Ovary (tissue), 10 donors: ENCODE measurements at regions of chr4 and their contacts with region 1.

Region 1: DNA sequence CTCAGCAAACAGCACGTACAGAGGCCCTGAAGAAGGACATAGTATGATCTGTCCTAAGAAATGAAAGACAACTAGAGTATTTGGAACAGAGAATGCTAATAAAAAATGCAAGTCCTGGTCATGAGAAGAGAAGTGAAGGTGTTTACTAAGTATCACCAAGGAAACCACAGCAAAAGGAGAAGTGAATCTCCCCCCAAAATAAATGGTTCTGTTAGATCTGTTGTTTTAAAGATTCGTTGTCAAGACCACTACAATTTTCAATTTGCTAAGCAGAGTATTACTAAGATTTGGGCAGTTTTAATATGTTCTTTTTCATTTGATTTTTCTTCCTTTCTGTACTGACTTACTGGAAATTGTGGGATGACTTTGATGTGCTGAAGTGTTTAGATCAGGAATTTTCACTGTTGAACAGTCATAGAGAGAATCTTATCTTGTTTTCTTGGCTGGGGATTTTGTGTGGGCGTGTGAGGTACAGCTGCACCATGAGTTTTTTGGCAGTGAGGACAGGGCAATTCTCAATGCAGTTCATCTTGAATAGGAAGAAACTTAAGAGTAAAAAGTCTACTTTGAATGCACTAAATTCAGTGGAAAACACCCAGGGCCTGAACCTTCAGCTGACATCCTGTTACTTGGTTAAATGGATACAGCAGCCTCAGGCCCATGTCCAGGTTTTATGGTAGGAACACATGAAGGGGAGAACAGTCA is 132.2 kb downstream of the STIM2 start:
- DNase-seq: peak; percentile 61 to 69 (median 68)
- H3K4me3 ChIP-seq: no peak overlapping the region
- H3K27ac ChIP-seq: peak overlapping the region in 1 of 2 donors; percentile 78
- H3K4me1 ChIP-seq: peaks cover 3% of the 10 kb centered on the region
- H3K27me3 ChIP-seq: no peaks in the 10 kb centered on the region
- CTCF ChIP-seq: no peak
- EP300 ChIP-seq: no peak
- POLR2A ChIP-seq: no peak

Region 2: DNA sequence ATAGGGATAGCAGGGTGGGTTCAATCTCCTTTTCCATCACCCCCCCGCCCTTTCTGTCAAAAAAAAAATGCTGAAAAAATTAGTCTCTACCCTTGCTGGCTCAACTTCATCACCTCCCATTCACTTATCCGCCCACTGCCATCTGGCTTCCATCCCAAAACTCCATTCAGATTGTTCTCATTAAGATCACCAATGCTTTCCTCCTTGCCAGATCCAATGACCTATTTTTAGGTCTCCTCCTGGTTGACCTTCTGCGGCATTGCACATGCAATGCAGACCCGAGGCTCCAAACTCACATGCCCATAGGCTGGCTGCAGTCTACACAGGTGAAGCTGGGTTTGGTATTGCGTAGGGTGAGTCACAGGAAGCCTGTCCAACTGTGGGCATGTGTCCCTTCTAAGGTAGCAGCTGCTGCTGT is 153.3 kb before region 1 on chr4:
- intact Hi-C with region 1: no loop called
- DNase-seq: no peak
- H3K4me3 ChIP-seq: no peak overlapping the region
- H3K27ac ChIP-seq: no peak overlapping the region
- H3K4me1 ChIP-seq: peaks cover 3% of the 10 kb centered on the region
- H3K27me3 ChIP-seq: no peaks in the 10 kb centered on the region
- CTCF ChIP-seq: no peak
- EP300 ChIP-seq: no peak
- POLR2A ChIP-seq: no peak

Region 3: GRCh38 chr4:26860157-26860921 is 132.5 kb before region 1 on chr4 and contains the start of gene STIM2:
- intact Hi-C with region 1: loop called in 3 of 4 experiments (anchors 5 to 10 kb)
- DNase-seq: peak; percentile 96 to 99 (median 97)
- H3K4me3 ChIP-seq: peak within 1 kb of the TSS; percentile 82
- H3K27ac ChIP-seq: peak within 1 kb of the TSS; percentile 96
- H3K4me1 ChIP-seq: peaks cover 4% of the 10 kb centered on the region
- H3K27me3 ChIP-seq: no peaks in the 10 kb centered on the region
- CTCF ChIP-seq: peak; percentile 29 to 68 (median 61)
- EP300 ChIP-seq: no peak
- POLR2A ChIP-seq: peak; percentile 65
- total RNA-seq, gene STIM2: 28.7 to 47.9 (median 40.2) TPM

Region 4: DNA sequence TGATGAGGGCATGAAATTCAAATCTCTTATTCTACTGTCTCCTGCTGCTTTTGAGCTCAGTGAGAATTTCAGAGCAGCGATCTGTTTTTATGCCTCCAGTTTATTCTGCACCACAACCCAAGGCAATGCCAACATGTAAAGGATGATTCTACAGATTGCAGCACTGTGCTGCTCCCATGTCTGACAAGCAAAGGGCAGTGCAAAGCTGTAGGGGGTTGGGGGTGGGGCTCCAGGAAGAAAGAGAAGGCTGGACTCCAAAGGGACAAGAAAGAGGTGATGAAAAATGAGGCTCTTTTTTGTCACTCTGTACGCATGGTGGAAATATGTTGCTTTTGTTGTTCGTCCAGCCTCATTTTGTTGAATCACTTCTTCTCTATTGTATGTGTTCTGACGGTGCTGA is 122.4 kb after region 1 on chr4:
- intact Hi-C with region 1: no loop called
- DNase-seq: no peak
- H3K4me3 ChIP-seq: no peak overlapping the region
- H3K27ac ChIP-seq: no peak overlapping the region
- H3K4me1 ChIP-seq: no peaks in the 10 kb centered on the region
- H3K27me3 ChIP-seq: no peaks in the 10 kb centered on the region
- CTCF ChIP-seq: no peak
- EP300 ChIP-seq: no peak
- POLR2A ChIP-seq: no peak